ENCODE measurements at regions of chr10 and their contacts with region 1.

Region 1: DNA sequence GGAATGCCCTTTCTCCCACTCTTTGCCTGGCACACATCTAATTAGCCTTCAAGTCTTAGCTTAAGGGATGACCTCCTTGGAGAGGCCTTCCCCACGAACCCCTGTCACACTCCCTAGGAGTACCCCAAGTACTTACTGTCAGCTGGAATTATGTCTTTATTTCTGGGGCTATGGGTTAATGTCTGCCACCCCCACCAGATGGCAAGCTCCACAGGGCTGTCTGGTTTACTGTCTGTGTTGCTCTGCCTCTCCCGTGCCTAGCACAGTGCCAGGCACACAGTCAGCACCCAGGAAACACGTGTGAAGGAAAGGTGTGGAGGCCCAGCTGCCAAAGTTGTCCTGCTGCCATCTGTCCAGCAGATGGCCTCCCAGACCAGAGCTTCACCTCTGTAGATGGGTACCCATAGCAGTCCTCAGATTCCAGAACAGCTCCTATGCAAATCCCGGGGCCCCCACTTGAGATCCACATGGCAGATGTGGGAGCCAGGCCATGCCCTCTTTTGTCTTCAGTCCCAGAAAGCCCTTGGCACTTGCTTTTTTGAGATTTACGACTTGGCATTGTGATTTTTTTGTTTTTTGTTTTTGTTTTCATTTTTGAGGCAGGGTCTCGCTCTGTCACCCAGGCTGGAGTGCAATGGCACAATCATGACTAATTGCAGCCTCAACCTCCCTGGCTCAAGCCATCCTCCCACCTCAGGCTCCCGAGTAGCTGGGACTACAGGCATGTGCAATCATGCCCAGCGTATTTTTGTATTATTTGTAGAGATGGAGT is 17.2 kb upstream of the PALD1 start:
- DNase-seq: peak; percentile 44
- ATAC-seq: peak; percentile 75
- H3K4me3 Mint-ChIP-seq: no peak overlapping the region
- H3K27ac Mint-ChIP-seq: no peak overlapping the region
- H3K4me1 Mint-ChIP-seq: peaks cover 19% of the 10 kb centered on the region
- H3K27me3 Mint-ChIP-seq: peaks cover 26% of the 10 kb centered on the region
- CTCF ChIP-seq: peak; percentile 70

Region 2: DNA sequence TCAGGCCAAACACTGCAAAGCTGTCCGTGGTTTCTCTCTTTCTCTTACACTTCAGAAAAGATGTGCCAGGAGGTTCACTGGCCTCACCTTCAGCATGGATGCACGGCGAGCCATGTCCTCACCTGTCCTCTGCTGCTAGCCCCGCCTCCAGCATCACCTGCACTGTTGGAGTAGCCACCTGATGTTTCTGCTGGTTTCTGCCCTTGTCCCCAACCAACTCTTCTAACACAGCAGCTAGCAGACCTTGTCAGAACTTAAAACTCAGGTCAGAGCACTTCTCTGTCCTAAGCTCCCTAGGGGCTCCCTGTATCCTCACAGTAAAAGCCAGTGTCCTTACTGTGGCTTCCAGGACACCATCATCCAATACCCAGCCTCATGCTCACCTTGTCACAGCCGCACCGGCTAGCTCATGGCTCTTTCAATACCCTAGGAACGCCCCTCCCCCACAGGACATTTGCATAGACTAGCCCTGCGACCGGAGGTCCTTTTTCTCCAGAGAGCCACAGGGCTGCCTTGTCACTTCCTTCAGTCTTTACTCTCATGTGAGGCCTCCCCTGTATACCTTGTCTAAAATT is 32.3 kb after region 1 on chr10:
- CTCF ChIA-PET with region 1: interaction called, 10 read pairs
- POLR2A ChIA-PET with region 1: no interaction called
- intact Hi-C with region 1: loop called (anchors 2 kb)
- DNase-seq: peak; percentile 55
- ATAC-seq: peak; percentile 74
- H3K4me3 Mint-ChIP-seq: peak overlapping the region; percentile 71
- H3K27ac Mint-ChIP-seq: peak overlapping the region; percentile 91
- H3K4me1 Mint-ChIP-seq: peaks cover 77% of the 10 kb centered on the region
- H3K27me3 Mint-ChIP-seq: no peaks in the 10 kb centered on the region
- CTCF ChIP-seq: no peak

Region 3: GRCh38 chr10:70549962-70550458 is 88.6 kb after region 1 on chr10:
- CTCF ChIA-PET with region 1: interaction called, 21 read pairs
- POLR2A ChIA-PET with region 1: no interaction called
- intact Hi-C with region 1: no loop called
- DNase-seq: peak; percentile 58
- ATAC-seq: peak; percentile 75
- H3K4me3 Mint-ChIP-seq: no peak overlapping the region
- H3K27ac Mint-ChIP-seq: no peak overlapping the region
- H3K4me1 Mint-ChIP-seq: no peaks in the 10 kb centered on the region
- H3K27me3 Mint-ChIP-seq: no peaks in the 10 kb centered on the region
- CTCF ChIP-seq: no peak

Region 4: DNA sequence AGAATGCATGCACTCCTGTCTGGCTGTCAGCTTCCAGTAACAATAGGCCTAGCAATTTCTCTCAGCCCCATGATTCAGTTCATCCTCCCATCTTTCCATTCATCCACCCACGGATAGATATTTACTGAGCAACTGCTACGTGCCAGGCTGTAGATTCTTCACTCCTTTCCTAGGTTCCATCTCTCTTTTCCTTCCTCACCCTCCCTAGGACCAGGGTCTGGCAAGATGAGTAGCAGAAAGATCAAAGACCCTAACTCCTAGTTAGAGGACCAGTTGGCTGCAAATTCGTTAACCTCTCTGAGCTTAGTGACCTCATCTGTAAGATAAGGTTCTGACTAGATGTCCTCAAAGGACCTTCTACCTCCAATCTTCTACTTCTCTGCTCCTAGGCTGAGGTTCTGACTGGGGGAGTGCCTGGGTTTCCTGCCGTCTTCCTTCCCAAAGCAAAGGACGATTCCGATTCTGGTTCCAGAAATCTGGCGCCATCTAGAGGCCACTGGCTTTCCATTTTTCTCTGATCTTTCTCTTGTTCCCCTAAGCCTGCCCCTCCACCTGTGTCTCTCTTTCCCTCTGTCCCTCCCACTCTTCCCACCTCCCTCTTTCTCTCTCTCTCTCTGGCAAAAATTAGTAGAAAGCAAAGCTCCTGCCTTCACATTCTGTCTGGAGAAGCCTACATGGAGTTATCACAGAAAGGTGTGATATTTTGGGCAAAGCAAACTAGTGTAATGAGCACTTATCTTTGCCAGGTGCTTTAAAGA is 297.5 kb after region 1 on chr10:
- CTCF ChIA-PET with region 1: interaction called, 31 read pairs
- POLR2A ChIA-PET with region 1: no interaction called
- intact Hi-C with region 1: loop called (anchors 1 kb)
- DNase-seq: no peak
- ATAC-seq: peak; percentile 34
- H3K4me3 Mint-ChIP-seq: no peak overlapping the region
- H3K27ac Mint-ChIP-seq: no peak overlapping the region
- H3K4me1 Mint-ChIP-seq: no peaks in the 10 kb centered on the region
- H3K27me3 Mint-ChIP-seq: peaks cover 6% of the 10 kb centered on the region
- CTCF ChIP-seq: peak; percentile 23

Measured in activated B cell treated with CpG ODN at 0.5 μM for 24 hours (primary cell).